T-cell (primary cell): ENCODE measurements at regions of chr12 and their contacts with region 1.

Region 1: DNA sequence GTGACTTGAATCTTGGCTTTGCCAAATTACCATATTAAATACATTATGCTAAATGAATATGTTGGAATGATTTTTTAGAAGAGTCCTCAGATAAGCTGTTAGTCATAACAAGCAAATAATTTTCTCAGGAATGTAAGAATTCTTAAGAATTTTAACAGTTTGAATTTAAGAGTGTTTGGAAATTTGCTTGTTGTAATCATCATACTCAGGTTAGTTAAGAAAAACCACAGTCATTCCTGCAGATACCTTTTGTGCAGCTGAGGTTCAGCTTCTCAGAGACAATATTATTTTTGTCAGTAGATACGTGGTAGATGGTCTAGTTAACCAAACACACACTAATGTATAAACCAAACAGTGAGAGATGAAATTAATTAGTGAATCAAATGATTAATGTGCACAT is 8.9 kb downstream of the WNK1 start:
- DNase-seq: no peak
- ATAC-seq: no peak
- H3K4me3 ChIP-seq: no peak overlapping the region
- H3K4me3 Mint-ChIP-seq: peak overlapping the region in 1 of 3 donors; percentile 37
- H3K27ac ChIP-seq: no peak overlapping the region
- H3K27ac Mint-ChIP-seq: peak overlapping the region in 1 of 2 donors; percentile 32
- H3K4me1 ChIP-seq: peaks cover 35 to 37% of the 10 kb centered on the region in 2 experiments
- H3K4me1 Mint-ChIP-seq: peaks cover 45 to 81% (median 77%) of the 10 kb centered on the region in 3 donors
- H3K27me3 ChIP-seq: no peaks in the 10 kb centered on the region
- H3K27me3 Mint-ChIP-seq: no peaks in the 10 kb centered on the region

Region 2: DNA sequence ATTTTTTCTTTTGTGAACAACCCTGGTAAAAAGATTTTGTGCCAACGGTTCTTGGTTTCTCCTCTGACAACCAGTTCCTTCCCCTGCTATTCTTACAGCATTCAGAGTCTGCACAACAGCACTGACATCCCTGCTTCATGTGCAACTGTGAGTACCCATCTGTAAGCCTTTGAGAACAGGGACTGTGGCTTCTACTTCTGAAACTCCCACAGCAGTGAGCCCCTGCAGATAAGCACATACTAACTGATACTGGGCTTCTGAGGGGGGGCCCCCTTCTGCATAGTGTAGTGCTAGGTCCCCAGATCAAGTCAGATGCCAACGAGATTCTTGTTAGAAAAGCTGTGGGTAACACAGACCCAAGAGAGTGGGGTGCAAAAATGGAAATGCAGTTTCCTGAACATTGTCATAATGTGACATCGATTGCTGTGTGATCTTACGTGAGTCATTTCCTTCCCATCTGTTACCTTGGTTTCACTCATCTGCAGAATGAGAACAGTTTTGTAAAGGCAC is 86.9 kb before region 1 on chr12:
- CTCF ChIA-PET with region 1: no interaction called
- POLR2A ChIA-PET with region 1: interaction called in 1 of 2 experiments, 10 read pairs
- DNase-seq: peak in 34 of 35 experiments; percentile 25 to 86 (median 63)
- ATAC-seq: peak; percentile 81 to 93 (median 90)
- H3K4me3 ChIP-seq: peak overlapping the region in 1 of 2 donors; percentile 5
- H3K4me3 Mint-ChIP-seq: peak overlapping the region; percentile 52 to 64 (median 63)
- H3K27ac ChIP-seq: peak overlapping the region; percentile 87
- H3K27ac Mint-ChIP-seq: peak overlapping the region; percentile 83 to 96
- H3K4me1 ChIP-seq: peaks cover 28 to 60% of the 10 kb centered on the region in 2 experiments
- H3K4me1 Mint-ChIP-seq: peaks cover 33 to 66% (median 60%) of the 10 kb centered on the region in 3 donors
- H3K27me3 ChIP-seq: no peaks in the 10 kb centered on the region
- H3K27me3 Mint-ChIP-seq: no peaks in the 10 kb centered on the region

Region 3: GRCh38 chr12:779745-780734 is 18.8 kb after region 1 on chr12:
- CTCF ChIA-PET with region 1: interaction called in 1 of 2 experiments, 12 read pairs
- POLR2A ChIA-PET with region 1: interaction called in 1 of 2 experiments, 6 read pairs
- DNase-seq: no peak
- ATAC-seq: peak; percentile 34 to 68 (median 59)
- H3K4me3 ChIP-seq: no peak overlapping the region
- H3K4me3 Mint-ChIP-seq: peak overlapping the region; percentile 76 to 80 (median 79)
- H3K27ac ChIP-seq: no peak overlapping the region
- H3K27ac Mint-ChIP-seq: peak overlapping the region; percentile 21 to 71
- H3K4me1 ChIP-seq: peaks cover 25 to 31% of the 10 kb centered on the region in 2 experiments
- H3K4me1 Mint-ChIP-seq: peaks cover 76 to 80% (median 77%) of the 10 kb centered on the region in 3 donors
- H3K27me3 ChIP-seq: no peaks in the 10 kb centered on the region
- H3K27me3 Mint-ChIP-seq: no peaks in the 10 kb centered on the region

Region 4: DNA sequence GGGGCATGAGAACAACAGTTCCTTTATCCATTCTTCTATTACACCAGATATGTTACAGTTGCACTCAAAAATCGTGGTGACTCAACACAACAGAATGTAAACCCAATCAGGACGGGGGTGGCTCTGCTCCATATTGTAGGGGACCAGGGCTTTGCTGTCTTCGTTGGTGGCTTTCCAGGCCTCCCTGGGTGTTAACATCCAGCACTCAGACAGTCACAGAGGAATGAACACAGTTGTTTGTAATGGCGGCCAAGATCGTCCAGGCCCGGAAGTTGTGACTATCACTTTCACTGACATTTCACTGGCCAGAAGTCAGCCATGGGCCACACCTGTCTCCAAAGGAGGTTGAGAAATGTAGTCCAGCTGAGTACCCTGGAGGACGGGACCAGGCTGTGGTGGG is 1495.7 kb after region 1 on chr12:
- CTCF ChIA-PET with region 1: no interaction called
- POLR2A ChIA-PET with region 1: no interaction called
- DNase-seq: no peak
- ATAC-seq: no peak
- H3K4me3 ChIP-seq: no peak overlapping the region
- H3K4me3 Mint-ChIP-seq: no peak overlapping the region
- H3K27ac ChIP-seq: no peak overlapping the region
- H3K27ac Mint-ChIP-seq: no peak overlapping the region
- H3K4me1 ChIP-seq: peaks cover 3 to 8% of the 10 kb centered on the region in 2 experiments
- H3K4me1 Mint-ChIP-seq: peaks cover 0 to 10% (median 7%) of the 10 kb centered on the region in 3 donors
- H3K27me3 ChIP-seq: no peaks in the 10 kb centered on the region
- H3K27me3 Mint-ChIP-seq: peaks cover 0 to 3% of the 10 kb centered on the region in 2 donors